ENCODE measurements at regions of chr3 and their contacts with region 1.

Region 1: DNA sequence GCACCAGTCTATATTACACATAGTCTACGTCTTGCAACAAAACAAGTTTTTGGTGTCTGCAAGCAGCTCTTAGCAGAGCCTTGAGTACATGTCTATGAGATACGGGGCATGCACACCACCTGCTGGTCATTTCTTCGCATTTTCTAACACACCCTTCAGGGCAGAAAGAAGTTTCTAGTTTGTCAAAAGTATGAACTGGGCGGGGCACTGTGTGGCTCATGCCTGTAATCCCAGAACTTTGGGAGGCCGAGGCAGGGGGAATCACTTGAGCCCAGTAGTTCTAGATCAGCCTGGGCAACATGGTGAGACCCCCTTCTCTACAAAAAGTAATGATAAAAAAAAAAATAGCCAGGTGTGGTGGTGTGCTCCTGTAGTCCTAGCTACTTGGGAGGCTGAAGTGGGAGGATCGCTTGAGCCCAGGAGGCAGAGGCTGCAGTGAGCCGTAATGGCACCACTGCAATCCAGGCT is 64.2 kb upstream of the ARL8B start:
- DNase-seq: peak; percentile 75
- ATAC-seq: peak; percentile 93
- H3K4me3 ChIP-seq: no peak overlapping the region
- H3K27ac ChIP-seq: no peak overlapping the region
- H3K4me1 ChIP-seq: peaks cover 34% of the 10 kb centered on the region
- H3K27me3 ChIP-seq: no peaks in the 10 kb centered on the region; a peak in 1 of 4 replicates
- CTCF ChIP-seq: peak; percentile 70 to 87 (median 76)
- EP300 ChIP-seq: no peak
- POLR2A ChIP-seq: no peak
- RAD21 ChIP-seq: peak; percentile 99

Region 2: DNA sequence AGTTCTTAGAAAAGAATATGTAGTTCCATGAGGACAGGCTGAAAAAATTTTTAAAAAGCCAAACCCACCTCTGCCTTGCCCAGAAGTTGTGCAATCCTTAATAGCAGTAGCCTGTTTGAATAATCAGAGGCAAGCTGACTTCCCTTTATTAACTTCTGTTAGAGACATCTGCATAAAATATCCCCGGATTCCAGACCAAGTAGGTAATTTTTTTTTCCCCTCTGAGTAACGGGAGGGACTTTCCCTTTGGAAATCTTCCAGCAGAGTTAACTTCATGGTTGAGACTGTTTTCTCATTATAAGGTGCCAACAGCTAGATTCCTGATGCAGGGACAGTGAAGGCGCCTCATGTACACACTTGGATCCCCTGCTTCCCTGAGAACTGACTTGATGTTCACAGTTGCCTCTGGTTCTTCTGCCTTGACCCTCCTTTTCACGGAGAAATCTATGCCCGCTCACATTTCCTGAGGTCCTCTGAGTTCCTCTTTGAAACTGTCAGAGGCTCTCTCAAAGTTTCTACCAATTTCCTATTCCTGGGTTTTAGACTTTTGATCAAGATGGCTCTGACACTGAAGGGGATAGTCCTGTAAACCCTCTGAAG is 306.3 kb before region 1 on chr3:
- CTCF ChIA-PET with region 1: interaction called, 4 read pairs
- POLR2A ChIA-PET with region 1: interaction called, 3 read pairs
- RAD21 ChIA-PET with region 1: interaction called, 8 read pairs
- SMC1A ChIA-PET with region 1: interaction called, 10 read pairs
- in situ Hi-C with region 1: no loop called
- intact Hi-C with region 1: no loop called
- DNase-seq: no peak
- ATAC-seq: peak; percentile 3
- H3K4me3 ChIP-seq: peak overlapping the region; percentile 65
- H3K27ac ChIP-seq: peak overlapping the region; percentile 95
- H3K4me1 ChIP-seq: peaks cover 71% of the 10 kb centered on the region
- H3K27me3 ChIP-seq: no peaks in the 10 kb centered on the region
- CTCF ChIP-seq: no peak
- EP300 ChIP-seq: peak in 1 of 2 experiments; percentile 4; a peak in 1 of 4 replicates
- POLR2A ChIP-seq: no peak
- RAD21 ChIP-seq: no peak

Region 3: DNA sequence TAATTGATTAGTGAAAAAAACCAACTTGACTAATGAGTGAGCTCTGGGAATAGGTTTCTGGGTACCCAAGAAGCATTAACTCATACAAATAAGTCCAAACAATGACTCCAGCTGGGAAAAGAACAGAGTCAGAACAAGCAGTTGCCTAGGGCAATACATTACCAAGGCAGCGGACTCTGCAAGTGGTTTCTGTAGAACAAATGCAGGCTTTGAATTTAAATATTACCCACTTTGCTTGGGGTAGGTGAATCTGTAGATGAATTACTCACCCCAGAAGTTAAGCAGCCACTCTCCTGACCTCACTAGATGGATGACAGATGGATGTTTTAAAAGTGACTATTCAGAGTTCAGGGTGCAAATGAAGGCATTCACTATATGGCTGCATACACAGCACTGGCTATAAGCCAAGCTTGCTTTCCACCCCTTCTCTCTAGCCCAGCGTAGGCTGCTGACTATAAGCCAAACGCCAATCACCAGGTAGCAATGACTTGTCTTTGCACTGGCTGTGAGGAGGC is 151.7 kb before region 1 on chr3:
- CTCF ChIA-PET with region 1: interaction called, 3 read pairs
- POLR2A ChIA-PET with region 1: no interaction called
- RAD21 ChIA-PET with region 1: no interaction called
- SMC1A ChIA-PET with region 1: interaction called, 4 read pairs
- in situ Hi-C with region 1: no loop called
- intact Hi-C with region 1: loop called (anchors 5 kb)
- DNase-seq: no peak
- ATAC-seq: peak; percentile 73
- H3K4me3 ChIP-seq: no peak overlapping the region
- H3K27ac ChIP-seq: no peak overlapping the region
- H3K4me1 ChIP-seq: peaks cover 22% of the 10 kb centered on the region
- H3K27me3 ChIP-seq: no peaks in the 10 kb centered on the region
- CTCF ChIP-seq: no peak
- EP300 ChIP-seq: no peak
- POLR2A ChIP-seq: no peak
- RAD21 ChIP-seq: no peak

Region 4: GRCh38 chr3:4994823-4995499 is 62.9 kb before region 1 on chr3:
- CTCF ChIA-PET with region 1: interaction called, 4 read pairs
- POLR2A ChIA-PET with region 1: interaction called, 8 read pairs
- RAD21 ChIA-PET with region 1: interaction called, 11 read pairs
- SMC1A ChIA-PET with region 1: interaction called, 8 read pairs
- in situ Hi-C with region 1: no loop called
- intact Hi-C with region 1: no loop called
- DNase-seq: no peak
- ATAC-seq: peak; percentile 75
- H3K4me3 ChIP-seq: no peak overlapping the region
- H3K27ac ChIP-seq: peak overlapping the region; percentile 7; the same call in 1 of the 2 replicates
- H3K4me1 ChIP-seq: peaks cover 10% of the 10 kb centered on the region
- H3K27me3 ChIP-seq: no peaks in the 10 kb centered on the region
- CTCF ChIP-seq: no peak
- EP300 ChIP-seq: no peak
- POLR2A ChIP-seq: 0 out of 2 replicates have a peak, but pooled peaks have one; percentile 31
- RAD21 ChIP-seq: no peak

Region 5: DNA sequence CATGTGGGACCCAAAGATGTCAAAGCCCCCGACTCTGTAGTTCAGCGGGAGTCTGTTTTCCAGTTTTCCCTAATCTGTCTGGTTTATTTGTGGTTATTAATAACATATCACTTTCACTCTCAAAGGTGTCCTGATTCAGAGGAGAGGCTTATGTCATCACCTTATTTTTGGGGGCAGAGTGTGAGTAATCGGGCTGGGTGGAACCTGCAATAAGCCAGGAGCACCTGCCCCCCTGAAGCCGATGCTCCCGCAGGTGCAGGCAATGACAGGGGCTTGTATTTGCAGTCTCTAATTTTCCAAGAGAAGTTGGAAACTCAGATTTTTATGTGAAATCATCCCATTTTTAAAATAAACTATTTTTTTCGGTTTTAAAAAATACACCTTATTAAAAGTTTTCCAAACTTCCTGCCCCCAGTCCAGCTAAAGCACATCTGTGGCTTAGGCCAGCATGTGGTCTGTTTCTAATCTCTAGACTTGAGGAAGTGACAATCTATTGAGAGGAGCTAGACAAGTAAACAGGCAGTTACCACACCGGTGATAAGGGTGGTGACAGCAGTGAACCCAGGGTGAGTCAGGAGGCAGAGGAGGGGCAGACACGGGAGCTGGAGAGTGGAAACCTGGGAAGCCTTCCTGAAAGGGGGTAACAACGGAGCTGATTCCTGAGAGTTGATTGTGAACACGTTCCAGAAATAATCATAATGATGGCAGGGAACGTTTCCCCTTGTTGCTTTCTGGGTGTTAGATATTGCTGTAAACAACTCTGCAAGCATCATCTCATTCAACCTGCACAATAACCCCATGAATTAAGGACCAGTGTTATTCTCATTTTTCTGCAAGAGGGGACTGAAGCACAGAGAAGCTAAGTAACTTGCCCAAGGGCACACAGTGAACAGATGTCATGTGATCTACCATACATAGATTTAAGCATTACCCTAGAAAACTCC is 41.4 kb before region 1 on chr3:
- CTCF ChIA-PET with region 1: interaction called, 14 read pairs
- POLR2A ChIA-PET with region 1: interaction called, 9 read pairs
- RAD21 ChIA-PET with region 1: interaction called, 87 read pairs
- SMC1A ChIA-PET with region 1: interaction called, 60 read pairs
- in situ Hi-C with region 1: no loop called
- intact Hi-C with region 1: loop called (anchors 2 kb)
- DNase-seq: no peak
- ATAC-seq: peak; percentile 63
- H3K4me3 ChIP-seq: no peak overlapping the region
- H3K27ac ChIP-seq: no peak overlapping the region
- H3K4me1 ChIP-seq: peaks cover 43% of the 10 kb centered on the region
- H3K27me3 ChIP-seq: no peaks in the 10 kb centered on the region
- CTCF ChIP-seq: no peak
- EP300 ChIP-seq: peak; percentile 69 to 76; a peak in 2 of 4 replicates
- POLR2A ChIP-seq: no peak
- RAD21 ChIP-seq: no peak

Region 6: DNA sequence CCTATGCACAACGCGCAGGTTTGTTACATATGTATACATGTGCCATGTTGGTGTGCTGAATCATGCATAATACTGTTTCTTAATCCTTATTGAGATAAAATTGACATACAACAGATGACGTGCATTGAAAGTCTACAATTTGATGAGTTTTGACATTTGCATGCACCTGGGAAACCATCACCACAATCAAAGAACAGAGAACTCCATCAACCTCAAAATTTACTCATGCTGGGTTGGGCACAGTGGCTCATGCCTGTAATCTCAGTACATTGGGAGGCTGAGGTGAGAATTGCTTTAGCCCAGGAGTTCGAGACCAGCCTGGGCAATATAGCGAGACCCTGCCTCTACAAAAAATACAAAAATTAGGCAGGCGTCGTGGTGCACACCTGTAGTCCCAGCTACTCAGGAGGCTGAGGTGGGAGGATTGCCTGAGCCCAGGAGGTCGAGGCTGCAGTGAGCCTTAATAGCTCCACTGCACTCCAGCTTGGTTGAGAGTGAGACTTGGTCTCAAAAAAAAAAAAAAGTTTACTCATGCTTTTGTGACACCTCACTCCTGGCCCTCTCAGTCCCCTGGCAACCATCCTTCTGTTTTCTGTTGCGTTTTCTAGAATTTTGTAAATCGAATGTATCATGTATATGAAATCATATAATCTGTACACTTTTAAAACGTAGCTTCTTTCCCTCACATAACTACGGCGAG is 22.0 kb before region 1 on chr3:
- CTCF ChIA-PET with region 1: interaction called, 31 read pairs
- POLR2A ChIA-PET with region 1: interaction called, 8 read pairs
- RAD21 ChIA-PET with region 1: interaction called, 73 read pairs
- SMC1A ChIA-PET with region 1: interaction called, 181 read pairs
- in situ Hi-C with region 1: no loop called
- intact Hi-C with region 1: no loop called
- DNase-seq: no peak
- ATAC-seq: peak; percentile 72
- H3K4me3 ChIP-seq: no peak overlapping the region
- H3K27ac ChIP-seq: no peak overlapping the region
- H3K4me1 ChIP-seq: peaks cover 14% of the 10 kb centered on the region
- H3K27me3 ChIP-seq: no peaks in the 10 kb centered on the region
- CTCF ChIP-seq: no peak
- EP300 ChIP-seq: no peak
- POLR2A ChIP-seq: no peak
- RAD21 ChIP-seq: no peak

Region 7: DNA sequence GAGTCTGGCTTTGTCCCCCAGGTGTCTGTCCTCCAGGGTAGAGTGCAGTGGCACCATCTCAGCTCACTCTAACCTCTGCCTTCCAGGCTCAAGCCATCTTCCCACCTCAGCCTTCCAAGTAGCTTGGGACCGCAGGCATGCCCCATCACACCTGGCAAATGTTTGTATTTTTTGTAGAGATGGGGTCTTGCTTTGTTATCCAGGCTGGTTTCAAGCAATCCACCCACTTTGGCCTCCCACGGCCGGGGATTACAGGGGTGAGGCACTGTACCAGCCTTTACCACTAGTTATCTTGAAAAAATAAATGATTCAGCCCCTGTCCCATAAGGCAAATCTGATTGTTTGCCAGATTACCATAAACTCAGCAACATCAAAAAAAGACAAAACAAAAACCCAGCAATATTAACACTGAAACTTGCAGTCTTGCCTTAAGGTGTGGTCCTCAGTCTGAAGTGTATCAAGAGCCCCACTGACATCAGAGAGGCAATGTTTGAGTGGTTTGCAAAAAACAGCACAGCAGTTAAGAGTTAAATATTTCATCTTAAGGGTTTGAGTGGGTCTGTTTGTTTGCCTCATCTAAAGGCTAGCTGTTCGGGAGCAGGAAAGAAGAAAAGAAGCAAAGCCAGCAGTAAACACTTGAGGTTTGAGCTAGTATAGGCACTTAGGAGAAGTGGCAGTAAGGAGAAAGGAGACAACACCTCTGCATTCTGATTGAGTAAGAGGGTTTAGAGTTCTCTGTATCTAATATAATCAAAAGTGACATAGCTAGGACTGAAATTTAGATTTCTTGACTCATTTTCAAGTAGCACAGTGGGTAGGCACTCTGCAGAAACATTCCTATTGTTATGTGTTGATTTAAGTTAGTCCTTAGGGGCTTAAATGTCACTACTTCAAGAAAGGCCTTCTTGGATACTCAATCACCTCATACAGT is 103.3 kb after region 1 on chr3:
- CTCF ChIA-PET with region 1: no interaction called
- POLR2A ChIA-PET with region 1: no interaction called
- RAD21 ChIA-PET with region 1: no interaction called
- SMC1A ChIA-PET with region 1: no interaction called
- in situ Hi-C with region 1: no loop called
- intact Hi-C with region 1: no loop called
- DNase-seq: no peak
- ATAC-seq: peak; percentile 43
- H3K4me3 ChIP-seq: no peak overlapping the region
- H3K27ac ChIP-seq: peak overlapping the region; percentile 23; the same call in 1 of the 2 replicates
- H3K4me1 ChIP-seq: peaks cover 17% of the 10 kb centered on the region
- H3K27me3 ChIP-seq: no peaks in the 10 kb centered on the region
- CTCF ChIP-seq: no peak
- EP300 ChIP-seq: no peak
- POLR2A ChIP-seq: no peak
- RAD21 ChIP-seq: no peak

Region 8: DNA sequence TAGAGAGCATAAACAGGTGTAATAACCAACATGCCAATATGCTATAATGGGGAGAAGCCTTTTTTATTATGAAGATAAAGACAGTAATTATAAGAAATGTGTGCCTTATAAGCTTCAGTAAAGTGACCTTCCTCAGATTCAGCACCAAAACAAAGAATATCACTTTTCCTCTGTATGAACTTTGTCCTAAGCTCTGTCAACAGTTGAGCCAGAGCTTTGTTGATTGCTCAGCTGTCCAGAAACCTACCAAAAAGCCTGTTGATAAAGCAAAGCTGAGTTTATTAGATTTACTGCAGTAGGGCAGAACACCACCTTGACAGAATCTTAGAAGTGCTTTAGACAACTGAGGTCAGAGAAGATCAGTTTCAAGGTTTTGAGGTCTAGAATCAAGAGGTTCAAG is 765.0 kb after region 1 on chr3:
- CTCF ChIA-PET with region 1: no interaction called
- POLR2A ChIA-PET with region 1: no interaction called
- RAD21 ChIA-PET with region 1: no interaction called
- SMC1A ChIA-PET with region 1: no interaction called
- in situ Hi-C with region 1: no loop called
- intact Hi-C with region 1: no loop called
- DNase-seq: no peak
- ATAC-seq: no peak
- H3K4me3 ChIP-seq: no peak overlapping the region
- H3K27ac ChIP-seq: no peak overlapping the region
- H3K4me1 ChIP-seq: no peaks in the 10 kb centered on the region
- H3K27me3 ChIP-seq: no peaks in the 10 kb centered on the region
- CTCF ChIP-seq: no peak
- EP300 ChIP-seq: no peak
- POLR2A ChIP-seq: no peak
- RAD21 ChIP-seq: no peak